Ascending aorta (tissue), 2 donors: ENCODE measurements at regions of chr4 and their contacts with region 1.

Region 1: DNA sequence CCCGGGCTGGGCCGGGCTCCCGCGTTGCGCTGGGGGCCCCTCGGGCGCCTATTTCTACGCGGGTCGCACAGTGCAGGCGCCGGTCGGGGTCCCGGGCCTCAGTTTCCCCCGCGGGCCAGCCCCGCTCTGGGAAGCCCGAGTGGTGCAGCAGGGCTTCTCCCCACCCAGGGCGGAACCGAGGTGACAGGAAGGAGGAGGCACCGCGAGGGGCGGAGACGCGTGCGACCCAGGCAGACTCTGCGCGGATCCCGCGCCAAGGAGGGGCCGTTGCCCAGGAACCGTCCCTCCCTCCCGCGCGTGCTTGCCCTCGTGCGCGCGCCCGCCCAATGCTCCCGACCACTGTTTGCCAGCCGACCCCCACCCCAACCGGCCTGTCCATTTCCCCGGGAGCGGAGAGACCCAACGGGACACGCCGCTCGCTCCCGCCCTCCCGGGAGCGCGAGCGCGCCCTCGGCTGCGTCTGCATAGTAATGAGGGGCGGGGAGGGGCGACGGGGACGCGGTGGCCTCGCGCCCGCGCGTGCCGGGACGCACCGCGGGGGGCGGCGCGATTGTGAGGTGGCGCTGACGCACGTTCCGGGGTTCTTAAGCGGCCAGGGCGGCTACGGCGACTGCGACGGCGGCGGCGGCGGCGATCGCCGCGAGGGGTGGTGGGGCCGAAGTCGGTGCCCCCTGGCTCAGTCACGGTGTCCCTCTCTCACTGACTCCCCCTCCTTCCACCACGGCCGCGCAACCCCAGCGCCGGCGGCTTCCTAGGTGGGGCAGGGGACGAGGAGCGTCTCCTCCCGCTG is at the start of gene CPEB2:
- DNase-seq: peak; percentile 79 to 97
- H3K4me3 ChIP-seq: peak within 1 kb of the TSS; percentile 99
- H3K27ac ChIP-seq: peak within 1 kb of the TSS; percentile 99 to 100
- H3K4me1 ChIP-seq: no peaks in the 10 kb centered on the region
- H3K27me3 ChIP-seq: no peaks in the 10 kb centered on the region
- CTCF ChIP-seq: peak in 1 of 3 experiments; percentile 4
- total RNA-seq, gene CPEB2: 30.4 TPM

Region 2: DNA sequence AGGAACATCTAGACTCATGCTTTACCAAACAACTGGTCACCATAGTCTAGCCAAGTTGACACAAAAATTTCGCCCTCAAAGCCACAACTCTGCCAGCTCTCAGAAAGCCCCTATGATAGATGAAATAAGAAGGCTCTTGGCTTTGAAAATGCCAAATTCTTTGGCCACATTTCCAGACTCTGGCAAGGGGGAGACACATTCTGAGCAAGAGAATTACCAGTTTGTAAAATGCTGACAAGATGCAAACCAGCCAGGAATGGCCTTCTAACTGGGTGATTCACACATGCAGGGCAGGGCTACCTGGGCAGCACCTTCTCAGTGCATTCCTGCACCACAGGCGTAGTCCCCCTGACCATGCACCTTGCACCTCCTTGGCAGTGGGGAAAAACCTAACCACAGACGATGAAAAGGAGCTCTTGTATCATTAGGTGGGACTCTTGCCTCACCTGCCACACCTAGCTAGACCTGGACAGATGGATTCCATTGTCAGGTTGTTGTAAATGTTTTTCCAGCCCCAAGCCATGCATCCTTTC is 77.2 kb before region 1 on chr4:
- intact Hi-C with region 1: loop called (anchors 2 kb)
- DNase-seq: no peak
- H3K4me3 ChIP-seq: no peak overlapping the region
- H3K27ac ChIP-seq: no peak overlapping the region
- H3K4me1 ChIP-seq: no peaks in the 10 kb centered on the region
- H3K27me3 ChIP-seq: no peaks in the 10 kb centered on the region
- CTCF ChIP-seq: no peak

Region 3: DNA sequence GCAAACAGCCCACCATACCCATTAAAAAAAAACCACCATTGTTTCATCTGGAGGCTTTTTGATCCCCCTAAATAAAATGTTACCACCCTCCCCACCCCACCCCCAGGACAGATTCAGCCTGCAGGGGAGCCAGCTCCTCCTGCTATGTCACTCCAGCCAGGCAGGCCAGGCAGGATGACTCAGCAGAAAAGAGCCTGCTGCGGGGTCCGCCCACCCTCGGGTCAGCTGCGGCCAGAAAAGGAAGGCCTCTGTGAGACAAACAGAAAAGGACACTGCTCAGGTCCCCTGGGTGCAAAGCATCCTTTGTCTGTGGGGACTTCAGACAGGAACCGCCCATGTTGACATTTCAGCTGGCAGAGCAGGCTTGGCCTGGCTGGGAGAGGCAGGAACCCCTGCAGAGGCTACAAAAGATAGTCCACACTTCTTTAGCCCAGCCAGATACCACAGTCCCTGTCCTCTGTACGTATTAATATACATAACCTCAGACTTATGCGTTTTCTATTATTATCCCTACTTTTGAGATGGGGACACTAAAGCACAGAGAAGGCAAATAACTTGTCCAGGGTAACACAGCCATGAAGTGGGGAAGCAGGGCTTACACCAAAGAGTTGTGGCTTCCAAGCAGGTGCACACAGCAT is 147.9 kb after region 1 on chr4:
- intact Hi-C with region 1: loop called (anchors 5 kb)
- DNase-seq: peak; percentile 21 to 79
- H3K4me3 ChIP-seq: no peak overlapping the region
- H3K27ac ChIP-seq: peak overlapping the region; percentile 70 to 75
- H3K4me1 ChIP-seq: peaks cover 11 to 19% of the 10 kb centered on the region in 2 donors
- H3K27me3 ChIP-seq: no peaks in the 10 kb centered on the region
- CTCF ChIP-seq: peak in 1 of 3 experiments; percentile 20

Region 4: GRCh38 chr4:15231265-15232091 is 229.4 kb after region 1 on chr4:
- intact Hi-C with region 1: loop called (anchors 2 kb)
- DNase-seq: peak in 1 of 2 donors; percentile 92
- H3K4me3 ChIP-seq: no peak overlapping the region
- H3K27ac ChIP-seq: peak overlapping the region; percentile 66 to 86
- H3K4me1 ChIP-seq: peaks cover 21 to 41% of the 10 kb centered on the region in 2 donors
- H3K27me3 ChIP-seq: no peaks in the 10 kb centered on the region
- CTCF ChIP-seq: peak; percentile 57 to 77 (median 70)

Region 5: DNA sequence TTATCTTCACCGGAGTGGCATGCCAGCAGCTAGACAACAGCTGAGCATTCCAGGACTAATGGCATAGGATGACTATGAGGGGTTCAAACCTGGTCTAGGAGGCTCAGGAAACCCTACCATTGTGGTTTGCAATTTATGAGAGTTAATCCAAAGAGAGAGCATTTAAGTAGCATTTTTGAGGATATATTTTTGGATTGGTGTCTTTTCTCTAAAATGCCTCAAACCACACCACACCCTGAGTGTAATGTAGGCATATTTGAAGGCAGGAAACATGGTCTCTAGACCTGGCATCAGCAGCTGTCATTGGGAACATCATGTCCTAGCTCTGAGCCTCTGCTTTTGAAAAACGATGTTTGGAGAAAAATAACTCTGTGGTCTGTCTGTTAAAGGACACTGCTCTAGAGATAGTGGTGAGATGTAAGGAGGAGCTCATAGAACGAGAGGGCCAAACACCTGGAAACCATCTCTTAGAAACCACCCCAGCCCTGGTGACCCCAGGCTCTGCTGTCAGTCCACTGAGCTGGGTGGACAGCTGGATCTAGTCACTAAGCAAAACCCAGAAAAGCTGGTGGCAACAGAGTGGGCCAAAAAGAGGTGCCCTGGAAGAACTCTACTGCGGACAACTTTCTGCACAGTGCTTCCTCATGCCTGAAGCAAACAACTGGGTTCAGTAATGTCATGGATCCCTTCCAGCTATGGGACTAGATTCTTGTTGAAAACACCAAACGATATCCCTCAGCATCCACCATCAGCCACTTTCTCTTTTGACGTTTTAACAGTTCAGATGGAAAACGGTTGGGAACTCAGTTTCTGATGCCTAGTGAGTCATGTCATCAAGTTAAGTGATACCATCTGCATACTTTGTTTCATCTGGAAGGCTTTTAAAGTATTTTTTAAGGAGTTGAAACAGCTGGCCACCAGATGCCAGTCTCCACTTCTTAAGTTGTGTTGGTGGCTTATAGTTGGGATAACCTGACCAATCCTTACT is 325.5 kb after region 1 on chr4:
- intact Hi-C with region 1: no loop called
- DNase-seq: no peak
- H3K4me3 ChIP-seq: no peak overlapping the region
- H3K27ac ChIP-seq: peak overlapping the region in 1 of 2 donors; percentile 27
- H3K4me1 ChIP-seq: peaks cover 0 to 4% of the 10 kb centered on the region in 2 donors
- H3K27me3 ChIP-seq: no peaks in the 10 kb centered on the region
- CTCF ChIP-seq: no peak

Region 6: DNA sequence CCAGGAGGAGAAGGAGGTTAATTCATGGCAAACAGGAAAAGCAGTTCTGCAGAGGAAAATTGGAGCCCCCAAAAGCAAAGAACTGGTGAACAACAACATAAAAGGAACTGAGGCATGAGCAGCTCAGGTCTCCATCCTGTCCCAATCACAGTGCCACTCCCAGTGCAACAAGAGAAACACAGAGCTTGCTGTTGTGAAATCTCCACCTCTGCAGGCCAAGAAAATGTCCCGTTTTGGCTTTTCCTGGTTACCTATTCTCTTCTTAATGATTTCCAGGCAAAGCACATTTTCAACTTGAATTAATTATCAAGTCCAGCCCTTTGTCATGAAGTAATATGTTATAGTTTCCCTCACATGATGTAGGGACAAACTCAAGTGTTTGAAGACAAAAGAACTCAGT is 426.5 kb after region 1 on chr4:
- intact Hi-C with region 1: loop called (anchors 5 kb)
- DNase-seq: no peak
- H3K4me3 ChIP-seq: peak overlapping the region; percentile 38 to 52
- H3K27ac ChIP-seq: peak overlapping the region; percentile 74 to 82
- H3K4me1 ChIP-seq: peaks cover 6 to 28% of the 10 kb centered on the region in 2 donors
- H3K27me3 ChIP-seq: no peaks in the 10 kb centered on the region
- CTCF ChIP-seq: no peak

Region 7: DNA sequence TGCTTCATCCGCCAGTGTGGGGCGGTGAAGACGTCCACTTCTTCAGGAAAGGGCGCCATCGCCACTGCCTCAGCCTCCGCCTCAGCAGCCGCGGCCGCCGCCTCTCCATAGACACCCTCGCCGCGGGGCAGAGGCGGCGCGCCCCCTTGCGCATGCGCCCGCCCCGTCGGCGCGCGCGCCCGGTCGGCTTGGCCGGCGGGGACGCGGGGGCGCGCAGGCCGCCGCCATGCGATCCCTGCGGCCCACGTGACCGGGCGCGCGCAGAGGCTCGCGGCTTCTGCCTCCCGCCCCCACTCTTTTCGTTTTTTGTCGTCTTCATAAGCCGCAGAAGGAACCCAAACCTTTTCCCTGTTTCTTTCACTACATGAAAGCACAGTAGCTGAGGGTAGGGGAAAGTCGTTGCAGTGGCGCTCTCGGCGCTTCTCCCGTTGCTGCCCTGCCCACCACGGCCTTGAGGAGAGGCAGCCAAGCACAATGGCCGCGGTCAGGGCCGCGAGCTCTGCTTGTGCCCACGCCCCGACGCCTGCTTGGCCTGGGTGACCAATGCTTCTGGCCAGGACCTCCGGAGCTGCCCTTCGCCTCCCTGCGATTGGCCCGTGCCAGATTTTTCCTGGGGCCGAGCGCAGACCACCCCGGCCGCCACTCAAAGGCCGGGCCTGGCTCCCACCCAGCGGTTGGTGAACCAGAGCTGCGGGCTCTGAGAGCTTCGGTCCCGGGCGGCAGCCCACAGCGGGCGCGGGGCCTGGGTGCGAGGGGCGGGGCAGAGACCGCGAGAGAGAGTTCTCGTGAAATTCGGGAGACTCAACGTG is 653.4 kb after region 1 on chr4 and contains the start of gene FBXL5:
- intact Hi-C with region 1: loop called (anchors 1 kb)
- DNase-seq: peak; percentile 20 to 88
- H3K4me3 ChIP-seq: peak within 1 kb of the TSS; percentile 82 to 94
- H3K27ac ChIP-seq: peak within 1 kb of the TSS; percentile 98 to 99
- H3K4me1 ChIP-seq: peaks cover 2 to 40% of the 10 kb centered on the region in 2 donors
- H3K27me3 ChIP-seq: no peaks in the 10 kb centered on the region
- CTCF ChIP-seq: peak in 1 of 3 experiments; percentile 23
- total RNA-seq, gene FBXL5: 59.0 TPM